RWPE1 (cell line): ENCODE measurements at regions of chr11 and their contacts with region 1.

Region 1: GRCh38 chr11:3995949-3996554 is 98.5 kb upstream of the RRM1 start:
- DNase-seq: no peak
- H3K27ac ChIP-seq: no peak overlapping the region
- CTCF ChIP-seq: no peak

Region 2: DNA sequence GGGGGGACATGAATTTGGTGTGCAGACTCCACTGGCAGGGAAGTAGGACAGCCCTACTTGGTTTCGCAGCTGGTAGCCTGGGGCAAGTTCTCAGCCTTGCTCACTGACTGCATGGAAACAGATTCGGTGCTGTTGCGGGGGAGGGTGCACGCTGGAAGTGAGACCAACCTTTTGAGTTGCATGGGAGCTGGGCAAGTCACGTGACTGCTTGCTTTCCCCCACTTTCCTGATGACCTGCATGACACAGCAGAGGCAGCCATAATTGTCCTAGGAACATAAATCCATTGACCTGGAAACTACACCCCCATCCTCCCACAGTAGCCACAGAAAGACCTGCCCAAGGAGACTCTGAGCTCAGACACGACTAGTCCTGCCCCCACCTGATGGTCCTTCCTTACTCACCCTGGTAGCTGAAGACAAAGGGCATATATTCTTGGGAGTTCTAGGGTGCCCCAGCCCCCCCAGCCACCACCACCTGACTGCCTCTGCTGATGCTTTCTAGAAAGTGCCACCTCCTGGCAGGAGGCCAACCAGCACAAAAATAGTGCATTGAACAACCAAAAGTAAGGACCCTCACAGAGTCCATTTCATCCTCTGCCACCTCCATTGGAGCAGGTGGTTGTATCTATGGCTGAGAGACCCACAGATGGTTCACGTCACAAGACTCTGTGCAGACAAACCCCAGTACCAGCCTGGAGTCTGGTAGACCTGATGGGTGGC is 1262.7 kb after region 1 on chr11:
- CTCF ChIA-PET with region 1: interaction called, 10 read pairs
- POLR2A ChIA-PET with region 1: no interaction called
- DNase-seq: no peak
- H3K27ac ChIP-seq: no peak overlapping the region
- CTCF ChIP-seq: no peak